Ovary (tissue), 10 donors: ENCODE measurements at regions of chr18 and their contacts with region 1.

Region 1: GRCh38 chr18:75111722-75112121 is 97.2 kb downstream of the PTGR3 start:
- DNase-seq: no peak
- H3K4me3 ChIP-seq: no peak overlapping the region
- H3K27ac ChIP-seq: no peak overlapping the region
- H3K4me1 ChIP-seq: no peaks in the 10 kb centered on the region
- H3K27me3 ChIP-seq: no peaks in the 10 kb centered on the region
- CTCF ChIP-seq: no peak
- EP300 ChIP-seq: no peak
- POLR2A ChIP-seq: no peak

Region 2: GRCh38 chr18:75016025-75016717 is 95.6 kb before region 1 on chr18:
- intact Hi-C with region 1: no loop called
- DNase-seq: no peak
- H3K4me3 ChIP-seq: no peak overlapping the region
- H3K27ac ChIP-seq: no peak overlapping the region
- H3K4me1 ChIP-seq: no peaks in the 10 kb centered on the region
- H3K27me3 ChIP-seq: no peaks in the 10 kb centered on the region
- CTCF ChIP-seq: no peak
- EP300 ChIP-seq: no peak
- POLR2A ChIP-seq: no peak

Region 3: DNA sequence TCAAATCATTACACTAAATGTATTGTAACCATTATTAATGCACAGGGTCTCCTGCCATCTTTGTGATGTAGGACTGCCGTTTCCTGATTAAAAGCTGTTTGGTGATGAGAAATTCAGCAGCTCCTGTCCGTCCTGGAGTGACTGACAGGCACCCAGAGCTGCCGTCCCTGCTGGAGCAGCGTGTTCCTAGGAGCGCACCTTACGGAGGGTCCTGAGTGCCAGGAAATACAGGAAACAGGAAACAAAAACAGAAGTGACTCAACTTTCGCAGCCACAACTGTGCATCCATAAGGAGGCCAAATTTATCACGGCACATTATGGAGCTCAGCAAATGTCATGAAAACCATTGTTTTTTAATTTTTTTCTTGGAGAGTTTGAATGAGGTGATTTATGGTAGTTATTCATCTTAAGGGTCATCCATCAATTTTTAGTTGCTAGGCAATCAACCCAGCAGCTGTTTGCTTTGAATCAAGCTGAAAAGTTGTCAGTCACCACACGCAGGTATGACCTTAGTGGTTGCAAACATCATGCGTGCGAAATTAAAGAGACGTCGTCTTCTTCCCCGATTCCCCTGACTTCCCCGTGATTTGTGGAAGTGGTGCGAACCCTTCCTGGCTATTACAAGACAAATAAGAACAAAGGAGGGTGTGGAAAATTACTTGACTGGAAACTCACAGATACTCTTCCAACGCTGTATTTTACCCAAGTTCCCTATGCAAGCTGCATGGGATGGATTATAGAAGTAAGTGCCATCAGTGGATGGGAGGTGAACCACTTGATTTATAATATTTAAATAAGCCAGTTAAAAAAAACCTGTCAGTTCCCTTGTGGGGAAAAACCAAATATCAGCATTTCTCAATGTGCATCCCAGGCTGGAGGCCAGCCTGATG is 118.7 kb after region 1 on chr18:
- intact Hi-C with region 1: no loop called
- DNase-seq: no peak
- H3K4me3 ChIP-seq: no peak overlapping the region
- H3K27ac ChIP-seq: no peak overlapping the region
- H3K4me1 ChIP-seq: peaks cover 29% of the 10 kb centered on the region
- H3K27me3 ChIP-seq: no peaks in the 10 kb centered on the region
- CTCF ChIP-seq: no peak
- EP300 ChIP-seq: no peak
- POLR2A ChIP-seq: no peak

Region 4: DNA sequence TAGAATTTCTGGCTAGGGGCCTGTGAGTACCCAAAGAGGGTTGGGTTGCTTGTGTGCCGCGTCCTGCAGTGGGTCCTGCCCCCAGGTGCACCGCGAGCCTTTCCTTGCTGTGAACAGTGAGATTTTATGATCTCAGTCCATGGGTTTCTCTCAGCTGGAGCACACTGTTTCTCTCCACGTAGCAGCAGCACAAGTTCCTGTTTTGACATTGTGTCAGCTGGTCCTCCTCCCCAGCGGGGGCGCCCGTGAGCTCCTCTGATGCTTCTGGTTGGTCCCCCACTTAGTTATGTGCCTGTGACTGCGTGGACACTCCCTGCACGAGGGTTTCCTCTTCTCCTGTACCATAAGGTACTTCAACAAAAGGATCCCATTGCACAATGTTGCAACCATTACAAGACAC is 128.7 kb after region 1 on chr18:
- intact Hi-C with region 1: no loop called
- DNase-seq: no peak
- H3K4me3 ChIP-seq: no peak overlapping the region
- H3K27ac ChIP-seq: no peak overlapping the region
- H3K4me1 ChIP-seq: peaks cover 45% of the 10 kb centered on the region
- H3K27me3 ChIP-seq: no peaks in the 10 kb centered on the region
- CTCF ChIP-seq: no peak
- EP300 ChIP-seq: no peak
- POLR2A ChIP-seq: no peak

Region 5: GRCh38 chr18:76188097-76188496 is 1076.4 kb after region 1 on chr18:
- intact Hi-C with region 1: loop called in 1 of 4 experiments (anchors 5 kb)
- DNase-seq: no peak
- H3K4me3 ChIP-seq: no peak overlapping the region
- H3K27ac ChIP-seq: no peak overlapping the region
- H3K4me1 ChIP-seq: no peaks in the 10 kb centered on the region
- H3K27me3 ChIP-seq: no peaks in the 10 kb centered on the region
- CTCF ChIP-seq: no peak
- EP300 ChIP-seq: no peak
- POLR2A ChIP-seq: no peak